ENCODE measurements at regions of chr9 and their contacts with region 1.

Region 1: DNA sequence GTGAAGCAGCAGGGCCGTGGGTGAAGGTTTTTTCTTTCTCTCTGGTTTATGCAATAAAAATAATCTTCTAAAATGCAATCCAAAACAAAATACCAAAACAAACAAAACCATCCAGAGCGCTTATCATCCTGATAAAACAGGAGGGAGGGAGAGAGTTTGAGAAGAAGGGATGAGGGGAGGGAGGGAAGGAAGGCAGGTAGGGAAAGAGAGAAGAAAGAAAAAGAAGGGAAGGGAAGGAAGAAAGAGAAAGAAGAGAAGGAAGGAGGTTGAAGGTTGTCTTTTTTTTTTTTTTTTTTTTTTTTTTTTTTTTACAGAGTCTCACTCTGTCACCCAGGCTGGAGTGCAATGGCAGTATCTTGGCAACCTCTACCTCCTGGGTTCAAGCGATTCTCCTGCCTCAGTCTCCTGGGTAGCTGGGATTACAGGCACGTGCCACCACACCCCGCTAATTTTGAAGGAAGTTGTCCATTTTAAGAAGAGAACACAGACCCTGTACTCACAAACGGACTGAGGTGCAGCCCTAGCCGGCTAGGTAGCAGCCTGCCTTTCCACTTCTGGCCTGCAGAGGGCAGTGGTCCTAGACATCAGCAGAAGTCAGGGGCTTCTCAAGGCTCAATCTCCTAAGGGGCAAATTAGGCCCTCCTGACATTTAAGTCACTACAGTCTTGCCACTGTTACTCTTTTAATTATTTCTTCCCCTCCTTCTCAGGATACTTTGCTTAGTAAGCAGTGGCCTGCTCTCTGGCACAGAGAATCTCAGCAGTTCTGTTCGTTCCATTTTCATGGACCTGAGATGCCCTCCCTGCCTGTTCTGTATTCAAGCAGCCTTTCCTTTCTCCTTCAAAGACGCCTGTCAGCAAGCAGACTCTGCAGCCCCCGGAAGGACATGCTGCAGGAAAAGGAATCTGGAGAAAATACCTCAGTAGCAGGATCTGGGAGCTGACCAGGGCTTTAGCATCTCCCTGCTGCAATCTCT is 76.4 kb downstream of the EPB41L4B start:
- H3K4me3 ChIP-seq: no peak overlapping the region
- H3K27ac ChIP-seq: no peak overlapping the region
- H3K4me1 ChIP-seq: no peaks in the 10 kb centered on the region
- CTCF ChIP-seq: peak; percentile 46; the same call in 1 of the 2 replicates

Region 2: GRCh38 chr9:109229682-109230081 is 14.8 kb before region 1 on chr9:
- CTCF ChIA-PET with region 1: interaction called, 11 read pairs
- POLR2A ChIA-PET with region 1: no interaction called
- H3K4me3 ChIP-seq: no peak overlapping the region
- H3K27ac ChIP-seq: no peak overlapping the region
- H3K4me1 ChIP-seq: no peaks in the 10 kb centered on the region
- CTCF ChIP-seq: no peak

Region 3: GRCh38 chr9:109320331-109320741 is 75.9 kb after region 1 on chr9:
- CTCF ChIA-PET with region 1: interaction called, 11 read pairs
- POLR2A ChIA-PET with region 1: no interaction called
- H3K4me3 ChIP-seq: peak overlapping the region; percentile 71
- H3K27ac ChIP-seq: peak overlapping the region; percentile 56; the same call in 1 of the 2 replicates
- H3K4me1 ChIP-seq: 0 out of 2 replicates have a peak, but pooled peaks cover 5% of the 10 kb centered on the region
- CTCF ChIP-seq: no peak

Measured in HEK293 (cell line).